A673 (cell line): ENCODE measurements at regions of chr4 and their contacts with region 1.

Region 1: DNA sequence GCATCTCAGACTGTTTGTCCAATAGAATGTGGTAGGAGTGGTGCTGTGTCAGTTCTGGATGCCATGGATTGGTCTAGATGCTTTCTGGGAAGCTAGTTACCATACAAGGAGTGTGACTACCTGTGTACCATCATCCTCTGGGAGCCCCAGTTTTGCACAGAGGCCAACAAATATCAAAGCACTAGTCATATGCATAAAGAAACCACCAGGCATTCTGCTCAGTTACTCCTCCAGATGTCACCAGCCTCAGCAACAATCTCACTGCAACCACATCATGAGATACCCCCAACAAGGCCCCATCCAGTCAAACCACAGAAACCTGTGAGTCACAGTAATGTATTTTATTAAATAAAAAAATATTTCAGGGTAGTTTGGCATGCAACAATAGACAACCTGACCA is 435.8 kb upstream of the CPEB2 start:
- DNase-seq: no peak
- H3K4me3 ChIP-seq: no peak overlapping the region
- H3K27ac ChIP-seq: no peak overlapping the region
- H3K4me1 ChIP-seq: peaks cover 12% of the 10 kb centered on the region
- H3K27me3 ChIP-seq: no peaks in the 10 kb centered on the region
- CTCF ChIP-seq: no peak

Region 2: DNA sequence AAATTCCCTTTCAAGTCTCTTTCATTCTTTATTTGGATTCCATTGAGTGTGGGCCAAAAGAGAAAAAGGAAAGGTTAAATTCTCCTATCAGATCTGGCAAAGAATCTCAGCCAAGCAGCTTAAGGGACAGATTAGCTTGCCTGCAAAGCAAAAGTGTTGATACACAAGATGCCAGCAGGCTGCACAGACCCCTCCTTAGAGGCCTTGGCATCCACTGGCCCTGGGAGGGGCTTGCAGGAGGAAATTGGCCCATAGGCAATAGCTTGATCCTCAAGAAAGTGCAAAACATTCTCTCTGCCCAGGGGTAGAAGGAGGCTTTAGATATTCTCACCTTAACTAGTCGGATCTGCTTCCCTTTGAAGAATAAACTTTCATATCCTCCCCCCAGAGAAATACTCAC is 135.4 kb after region 1 on chr4:
- CTCF ChIA-PET with region 1: no interaction called
- POLR2A ChIA-PET with region 1: interaction called, 29 read pairs
- intact Hi-C with region 1: no loop called
- DNase-seq: peak; percentile 12
- H3K4me3 ChIP-seq: no peak overlapping the region
- H3K27ac ChIP-seq: no peak overlapping the region
- H3K4me1 ChIP-seq: no peaks in the 10 kb centered on the region
- H3K27me3 ChIP-seq: no peaks in the 10 kb centered on the region
- CTCF ChIP-seq: no peak